AG04450 (cell line): ENCODE measurements at regions of chr16 and their contacts with region 1.

Region 1: GRCh38 chr16:87435372-87436224 is 43.5 kb downstream of the MAP1LC3B start:
- DNase-seq: peak; percentile 84
- H3K4me3 ChIP-seq: 0 out of 2 replicates have a peak overlapping the region, but pooled peaks have one; percentile 5
- H3K27ac ChIP-seq: peak overlapping the region; percentile 85
- H3K27me3 ChIP-seq: no peaks in the 10 kb centered on the region
- CTCF ChIP-seq: no peak

Region 2: GRCh38 chr16:87416826-87417527 is 18.6 kb before region 1 on chr16:
- CTCF ChIA-PET with region 1: interaction called, 10 read pairs
- POLR2A ChIA-PET with region 1: no interaction called
- DNase-seq: no peak
- H3K4me3 ChIP-seq: no peak overlapping the region
- H3K27ac ChIP-seq: no peak overlapping the region
- H3K27me3 ChIP-seq: no peaks in the 10 kb centered on the region
- CTCF ChIP-seq: peak; percentile 82